ENCODE measurements at regions of chr12 and their contacts with region 1.

Region 1: DNA sequence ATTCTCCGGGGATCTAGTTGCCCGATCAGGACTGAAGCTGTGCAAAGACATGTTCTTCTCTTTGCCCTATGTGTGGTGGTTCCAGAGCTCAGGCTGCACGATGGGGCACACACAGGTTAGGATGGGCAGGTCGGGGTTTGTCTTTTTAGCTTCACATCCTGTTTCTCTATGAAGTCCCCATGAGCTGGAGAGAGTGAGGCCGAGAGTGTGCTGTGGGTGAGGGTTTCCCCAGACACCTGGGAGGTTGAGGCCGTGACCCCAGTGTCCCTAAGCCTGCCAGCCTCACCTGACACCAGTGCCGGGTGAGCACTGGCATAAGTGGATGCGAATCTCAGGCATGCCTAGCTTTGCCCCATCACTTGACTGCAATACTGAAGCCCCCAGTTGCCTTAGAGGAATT is 32.9 kb upstream of the IGF1 start:
- DNase-seq: no peak
- H3K4me3 ChIP-seq: no peak overlapping the region
- H3K27ac ChIP-seq: no peak overlapping the region
- H3K4me1 ChIP-seq: no peaks in the 10 kb centered on the region; a peak in 1 of 7 replicates
- H3K27me3 ChIP-seq: no peaks in the 10 kb centered on the region
- CTCF ChIP-seq: no peak
- EP300 ChIP-seq: no peak
- POLR2A ChIP-seq: no peak
- RAD21 ChIP-seq: no peak

Region 2: DNA sequence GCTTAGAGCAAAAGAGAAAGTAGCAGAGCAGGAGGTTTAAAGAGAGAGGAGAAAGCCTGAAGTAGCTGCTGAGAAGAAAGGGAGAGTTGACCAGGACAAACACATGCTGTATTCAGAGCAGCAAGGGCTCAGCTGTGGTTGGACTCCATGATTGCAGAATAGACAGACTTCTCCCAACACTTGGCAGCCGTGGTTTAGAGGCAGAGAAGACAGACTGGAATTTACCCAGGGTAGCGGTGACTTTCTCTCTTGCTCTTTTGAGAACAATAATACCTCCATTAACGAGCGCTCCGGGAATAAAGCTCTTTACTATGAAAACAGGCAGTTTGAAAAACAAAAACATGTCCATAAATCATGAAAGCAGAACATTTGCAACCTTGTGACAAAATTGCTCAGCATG is 11.5 kb before region 1 on chr12:
- CTCF ChIA-PET with region 1: interaction called, 14 read pairs
- POLR2A ChIA-PET with region 1: no interaction called
- DNase-seq: no peak
- H3K4me3 ChIP-seq: no peak overlapping the region
- H3K27ac ChIP-seq: no peak overlapping the region
- H3K4me1 ChIP-seq: no peaks in the 10 kb centered on the region
- H3K27me3 ChIP-seq: no peaks in the 10 kb centered on the region
- CTCF ChIP-seq: no peak
- EP300 ChIP-seq: no peak
- POLR2A ChIP-seq: no peak
- RAD21 ChIP-seq: no peak

Region 3: GRCh38 chr12:102702447-102703114 is 189.3 kb after region 1 on chr12:
- CTCF ChIA-PET with region 1: interaction called, 11 read pairs
- POLR2A ChIA-PET with region 1: no interaction called
- DNase-seq: peak in 1 of 2 experiments; percentile 65
- H3K4me3 ChIP-seq: no peak overlapping the region
- H3K27ac ChIP-seq: no peak overlapping the region
- H3K4me1 ChIP-seq: no peaks in the 10 kb centered on the region
- H3K27me3 ChIP-seq: no peaks in the 10 kb centered on the region
- CTCF ChIP-seq: peak in 2 of 3 experiments; percentile 58 to 61; a peak in 3 of 4 replicates
- EP300 ChIP-seq: no peak
- POLR2A ChIP-seq: no peak
- RAD21 ChIP-seq: peak; percentile 58 to 65

Region 4: DNA sequence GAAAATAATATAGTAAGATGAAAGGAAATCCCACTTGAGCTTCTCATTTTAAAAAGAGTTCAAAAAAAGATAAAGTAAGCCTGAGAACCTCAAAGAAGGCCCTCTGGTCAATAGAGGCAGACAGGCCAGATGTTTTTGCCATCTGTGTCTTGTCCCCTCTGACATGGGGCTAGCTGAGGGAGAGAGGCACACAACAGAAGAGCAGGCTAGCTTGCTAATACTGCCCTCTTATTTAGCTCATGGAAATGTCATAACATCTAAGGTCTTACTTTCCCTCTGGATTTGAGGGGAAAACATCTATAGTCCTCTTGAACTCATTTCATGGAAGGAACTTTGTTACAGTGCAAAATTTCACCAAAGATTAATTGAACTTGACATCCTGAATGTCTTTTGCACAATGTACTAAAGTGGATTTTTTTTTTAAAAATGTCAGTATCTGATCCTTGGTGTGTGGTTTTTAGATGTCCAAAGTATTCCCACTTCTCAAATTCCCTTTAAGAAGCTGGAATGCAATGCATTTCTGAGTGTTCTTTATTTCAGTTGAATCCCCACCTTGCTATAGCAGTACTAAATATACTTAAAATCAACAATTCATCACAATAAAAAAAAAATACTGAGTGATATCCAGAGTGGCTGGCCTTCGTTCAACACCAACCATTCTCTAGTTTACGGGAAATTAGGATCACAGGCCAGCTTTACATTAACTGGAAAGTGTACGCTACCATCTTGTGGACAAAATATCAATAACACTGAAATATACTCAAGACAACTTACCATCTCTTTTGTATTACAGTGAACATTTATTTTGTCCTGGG is 227.1 kb after region 1 on chr12:
- CTCF ChIA-PET with region 1: interaction called, 10 read pairs
- POLR2A ChIA-PET with region 1: no interaction called
- DNase-seq: no peak
- H3K4me3 ChIP-seq: no peak overlapping the region
- H3K27ac ChIP-seq: no peak overlapping the region
- H3K4me1 ChIP-seq: no peaks in the 10 kb centered on the region
- H3K27me3 ChIP-seq: no peaks in the 10 kb centered on the region
- CTCF ChIP-seq: peak in 1 of 3 experiments; percentile 15; a peak in 2 of 4 replicates
- EP300 ChIP-seq: no peak
- POLR2A ChIP-seq: no peak
- RAD21 ChIP-seq: peak; percentile 55 to 59

Measured in H1 (cell line).